AG04450 (cell line): ENCODE measurements at regions of chr13 and their contacts with region 1.

Region 1: DNA sequence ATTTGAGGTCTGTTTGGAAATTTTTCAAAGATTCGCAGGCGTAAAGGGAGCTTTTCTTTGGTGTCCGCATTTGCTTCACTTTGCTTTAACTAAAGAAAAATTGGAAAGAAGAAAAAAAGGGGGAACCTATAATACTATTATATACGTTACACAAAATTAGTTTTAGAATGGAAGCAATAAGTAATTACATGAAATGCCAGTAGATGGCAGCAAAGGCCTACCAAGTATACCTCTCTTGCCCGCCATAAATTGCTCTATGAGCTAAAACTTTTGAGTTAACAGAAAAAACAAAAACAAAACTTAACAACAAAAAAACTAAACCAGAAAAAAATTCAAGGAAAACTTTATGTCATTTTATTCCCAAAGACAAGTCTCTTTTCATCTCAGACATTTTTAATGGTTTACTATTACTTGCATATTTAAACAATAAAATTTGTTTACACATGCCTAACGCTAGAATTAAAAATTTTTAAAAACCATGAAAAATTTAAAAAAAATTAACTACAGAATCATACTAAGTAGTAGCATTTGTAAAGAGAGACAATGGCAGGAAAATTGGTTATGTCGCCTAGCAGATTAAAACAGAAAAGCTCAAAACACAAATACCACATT is 271.4 kb downstream of the NALCN start:
- DNase-seq: peak; percentile 29
- H3K4me3 ChIP-seq: no peak overlapping the region
- H3K27ac ChIP-seq: no peak overlapping the region
- H3K27me3 ChIP-seq: peaks cover 1% of the 10 kb centered on the region
- CTCF ChIP-seq: peak; percentile 67

Region 2: DNA sequence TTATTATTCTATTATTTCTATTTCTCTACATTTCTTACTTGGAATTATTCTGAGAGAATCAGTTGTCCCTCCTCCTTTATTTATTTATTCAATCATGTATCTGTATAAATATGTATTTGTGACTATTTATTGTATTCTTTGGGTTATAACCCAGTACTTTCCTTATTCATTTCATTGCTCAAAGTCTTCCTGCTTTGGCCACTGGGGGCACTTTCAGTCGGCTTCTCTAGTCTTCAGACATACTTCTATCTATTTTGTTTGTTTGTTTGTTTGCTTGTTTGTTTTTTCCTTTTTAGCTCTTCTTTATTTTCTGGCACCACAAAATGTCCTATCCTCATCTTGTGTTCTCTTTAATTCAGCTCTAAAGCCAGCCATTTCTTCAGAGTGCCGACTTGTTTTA is 11.0 kb after region 1 on chr13:
- CTCF ChIA-PET with region 1: interaction called, 30 read pairs
- POLR2A ChIA-PET with region 1: no interaction called
- DNase-seq: no peak
- H3K4me3 ChIP-seq: no peak overlapping the region
- H3K27ac ChIP-seq: no peak overlapping the region
- H3K27me3 ChIP-seq: no peaks in the 10 kb centered on the region
- CTCF ChIP-seq: peak; percentile 54

Region 3: GRCh38 chr13:101416174-101417042 is 271.5 kb after region 1 on chr13 and contains the start of gene NALCN:
- CTCF ChIA-PET with region 1: interaction called, 13 read pairs
- POLR2A ChIA-PET with region 1: no interaction called
- DNase-seq: no peak
- H3K4me3 ChIP-seq: peak within 1 kb of the TSS; percentile 63
- H3K27ac ChIP-seq: no peak within 1 kb of the TSS
- H3K27me3 ChIP-seq: no peaks in the 10 kb centered on the region
- CTCF ChIP-seq: no peak
- polyA plus RNA-seq, gene NALCN: 1.6 and 2.2 TPM in 2 replicates

Region 4: GRCh38 chr13:101487046-101487830 is 342.3 kb after region 1 on chr13:
- CTCF ChIA-PET with region 1: interaction called, 16 read pairs
- POLR2A ChIA-PET with region 1: no interaction called
- DNase-seq: no peak
- H3K4me3 ChIP-seq: no peak overlapping the region
- H3K27ac ChIP-seq: no peak overlapping the region
- H3K27me3 ChIP-seq: no peaks in the 10 kb centered on the region
- CTCF ChIP-seq: no peak

Region 5: GRCh38 chr13:101514788-101515187 is 369.9 kb after region 1 on chr13:
- CTCF ChIA-PET with region 1: interaction called, 17 read pairs
- POLR2A ChIA-PET with region 1: no interaction called
- DNase-seq: peak; percentile 33
- H3K4me3 ChIP-seq: no peak overlapping the region
- H3K27ac ChIP-seq: no peak overlapping the region
- H3K27me3 ChIP-seq: no peaks in the 10 kb centered on the region
- CTCF ChIP-seq: peak; percentile 75

Region 6: GRCh38 chr13:101767131-101767530 is 622.2 kb after region 1 on chr13:
- CTCF ChIA-PET with region 1: interaction called, 12 read pairs
- POLR2A ChIA-PET with region 1: no interaction called
- DNase-seq: no peak
- H3K4me3 ChIP-seq: no peak overlapping the region
- H3K27ac ChIP-seq: no peak overlapping the region
- H3K27me3 ChIP-seq: no peaks in the 10 kb centered on the region
- CTCF ChIP-seq: no peak

Region 7: DNA sequence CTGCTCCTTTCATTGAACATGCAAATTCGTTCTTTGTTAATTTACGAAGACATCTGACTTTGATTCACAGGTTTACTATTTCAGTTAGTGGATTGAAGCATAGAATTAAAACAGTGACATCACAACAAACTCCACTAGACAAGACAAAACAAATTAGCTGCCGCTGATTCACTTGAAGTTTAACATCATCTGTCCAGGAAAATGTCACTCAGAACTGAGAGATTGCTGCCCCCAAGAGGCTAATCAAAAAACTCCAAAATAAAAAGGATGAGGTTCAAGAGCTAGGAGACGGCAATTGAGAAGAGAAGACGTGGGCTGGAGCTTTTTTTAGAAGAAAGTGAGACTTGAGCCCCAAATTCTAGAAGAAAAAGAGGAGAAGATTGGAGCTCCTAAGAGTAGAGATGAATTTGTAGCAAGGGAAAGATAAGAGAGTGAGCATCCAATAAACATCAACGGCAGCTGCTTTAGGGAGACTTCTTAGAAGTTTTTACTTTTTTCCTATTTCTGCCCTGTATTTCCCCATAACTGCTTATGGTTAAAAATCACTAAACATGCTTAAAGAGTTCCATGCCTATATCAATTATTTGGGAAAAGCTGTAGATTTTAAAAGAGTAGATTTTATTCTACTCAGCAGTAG is 1411.1 kb after region 1 on chr13:
- CTCF ChIA-PET with region 1: interaction called, 16 read pairs
- POLR2A ChIA-PET with region 1: no interaction called
- DNase-seq: no peak
- H3K4me3 ChIP-seq: no peak overlapping the region
- H3K27ac ChIP-seq: no peak overlapping the region
- H3K27me3 ChIP-seq: no peaks in the 10 kb centered on the region
- CTCF ChIP-seq: peak; percentile 51